Posterior vena cava (tissue), 2 donors: ENCODE measurements at regions of chr1 and their contacts with region 1.

Region 1: GRCh38 chr1:236795035-236795756 is at the start of gene MTR:
- DNase-seq: peak; percentile 99
- total RNA-seq, gene MTR: 44.2 to 47.6 TPM

Region 2: DNA sequence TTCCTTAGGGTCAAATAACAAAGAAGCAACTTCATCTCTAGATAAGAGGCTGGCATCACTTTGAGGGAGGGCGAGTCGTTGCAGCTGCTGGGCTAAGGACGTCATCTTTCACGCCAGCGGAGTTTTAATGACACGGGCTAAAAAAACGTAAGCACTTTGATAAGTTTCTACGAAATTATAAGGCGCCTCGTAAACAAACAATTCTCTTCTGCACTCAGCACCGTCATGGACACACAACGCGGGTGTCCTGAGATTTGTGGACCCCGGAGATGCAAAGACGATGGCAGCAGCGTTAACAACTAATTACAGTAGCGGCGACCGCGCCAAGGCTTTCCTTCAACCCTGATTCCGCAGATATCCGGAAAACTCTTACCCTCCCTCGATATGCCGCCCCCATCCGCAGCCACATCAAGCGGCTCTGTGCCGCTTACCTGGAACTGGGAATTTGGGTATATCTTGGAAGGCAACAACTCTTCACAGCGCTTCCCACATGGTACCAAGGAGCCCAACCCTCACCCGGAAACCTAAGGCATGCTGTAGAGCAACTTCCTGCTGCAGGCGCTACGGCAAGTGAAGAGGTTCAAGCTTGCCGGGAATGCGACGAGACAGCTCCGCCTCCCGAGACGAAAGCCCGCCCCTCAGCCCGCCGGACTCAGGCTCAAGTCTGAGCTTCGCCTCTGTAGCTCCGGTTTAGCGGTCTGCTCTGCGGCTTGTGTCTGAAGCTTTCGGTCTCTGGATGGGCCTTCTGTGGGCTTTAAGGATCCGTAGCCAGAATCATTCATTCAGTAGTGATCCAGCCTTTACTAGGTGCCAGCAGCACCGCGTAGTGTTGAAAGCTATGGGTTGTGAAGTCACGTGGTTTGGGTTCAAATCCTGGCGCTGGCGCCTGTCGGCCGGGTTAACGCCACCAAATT is 190.9 kb before region 1 on chr1 and contains the start of gene HEATR1:
- intact Hi-C with region 1: loop called in 1 of 2 experiments (anchors 10 kb)
- DNase-seq: peak; percentile 98
- total RNA-seq, gene HEATR1: 27.4 to 28.3 TPM

Region 3: GRCh38 chr1:236833575-236833974 is 38.4 kb after region 1 on chr1:
- intact Hi-C with region 1: no loop called
- DNase-seq: no peak

Region 4: GRCh38 chr1:236844499-236845271 is 49.5 kb after region 1 on chr1:
- intact Hi-C with region 1: loop called in 1 of 2 experiments (anchors 10 kb)
- DNase-seq: no peak

Region 5: GRCh38 chr1:237041795-237042525 is 246.8 kb after region 1 on chr1 and contains the start of gene RYR2:
- intact Hi-C with region 1: loop called in 1 of 2 experiments (anchors 2 kb)
- DNase-seq: no peak
- total RNA-seq, gene RYR2: 7.6 to 8.8 TPM